ENCODE measurements at regions of chr5 and their contacts with region 1.

Region 1: GRCh38 chr5:132238169-132238744 is 10.6 kb upstream of the P4HA2 start:
- DNase-seq: peak; percentile 89
- ATAC-seq: peak; percentile 95
- H3K4me3 Mint-ChIP-seq: no peak overlapping the region
- H3K27ac Mint-ChIP-seq: no peak overlapping the region
- H3K4me1 Mint-ChIP-seq: no peaks in the 10 kb centered on the region
- H3K27me3 Mint-ChIP-seq: no peaks in the 10 kb centered on the region; the same call in 1 of the 2 replicates
- CTCF ChIP-seq: peak; percentile 78

Region 2: DNA sequence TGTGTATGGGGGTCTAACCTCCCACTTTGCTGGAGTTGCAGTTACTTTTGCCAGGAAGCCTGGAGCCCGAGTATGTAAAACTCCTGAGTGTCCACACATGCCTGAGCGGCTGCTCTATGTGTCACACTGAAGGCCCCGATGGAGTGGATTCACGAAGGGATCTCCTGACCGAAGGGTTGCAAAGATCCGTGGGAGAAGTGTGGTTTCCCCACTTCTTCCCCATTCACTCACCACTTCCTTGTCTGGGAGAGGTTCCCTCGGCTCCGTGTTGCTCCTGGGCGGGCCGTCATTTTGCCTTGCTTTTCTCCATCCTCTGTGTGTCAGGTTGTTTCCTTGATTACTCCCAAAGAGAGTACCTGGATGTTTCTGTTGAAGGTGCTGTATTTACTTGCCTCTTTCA is 194.1 kb before region 1 on chr5:
- CTCF ChIA-PET with region 1: no interaction called
- POLR2A ChIA-PET with region 1: no interaction called
- DNase-seq: no peak
- ATAC-seq: no peak
- H3K4me3 Mint-ChIP-seq: no peak overlapping the region
- H3K27ac Mint-ChIP-seq: no peak overlapping the region
- H3K4me1 Mint-ChIP-seq: peaks cover 14% of the 10 kb centered on the region
- H3K27me3 Mint-ChIP-seq: no peaks in the 10 kb centered on the region
- CTCF ChIP-seq: no peak

Region 3: GRCh38 chr5:132180134-132180745 is 58.0 kb before region 1 on chr5:
- CTCF ChIA-PET with region 1: interaction called, 18 read pairs
- POLR2A ChIA-PET with region 1: no interaction called
- DNase-seq: no peak
- ATAC-seq: peak; percentile 35
- H3K4me3 Mint-ChIP-seq: peak overlapping the region; percentile 53
- H3K27ac Mint-ChIP-seq: no peak overlapping the region
- H3K4me1 Mint-ChIP-seq: peaks cover 23% of the 10 kb centered on the region
- H3K27me3 Mint-ChIP-seq: no peaks in the 10 kb centered on the region
- CTCF ChIP-seq: peak; percentile 54; the same call in 1 of the 2 replicates

Region 4: DNA sequence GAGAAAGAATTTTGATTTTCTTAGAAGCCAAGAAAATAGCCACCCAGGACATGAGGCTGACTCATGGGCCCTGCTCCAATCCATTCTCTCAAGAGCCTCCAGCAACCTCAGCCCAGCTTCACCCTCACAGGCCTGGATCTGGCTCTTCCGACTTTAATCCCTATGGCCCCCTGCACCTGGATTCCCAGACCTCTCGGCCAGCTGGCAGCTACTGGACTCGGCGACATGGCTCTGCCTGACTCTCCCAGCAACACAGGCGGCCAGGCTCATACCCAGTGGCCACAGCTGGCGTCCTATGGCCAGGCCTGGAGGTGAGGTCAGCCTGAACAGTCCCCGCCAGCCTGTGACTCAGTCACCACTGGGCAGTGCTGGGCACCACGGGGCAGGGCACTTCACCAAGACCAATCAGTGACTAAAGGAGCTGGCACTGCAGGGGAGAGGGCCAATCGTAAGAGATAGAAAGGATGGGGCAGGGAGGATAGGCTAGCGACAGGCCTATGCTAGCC is 13.0 kb after region 1 on chr5:
- CTCF ChIA-PET with region 1: interaction called, 47 read pairs
- POLR2A ChIA-PET with region 1: no interaction called
- DNase-seq: no peak
- ATAC-seq: no peak
- H3K4me3 Mint-ChIP-seq: no peak overlapping the region
- H3K27ac Mint-ChIP-seq: no peak overlapping the region
- H3K4me1 Mint-ChIP-seq: peaks cover 6% of the 10 kb centered on the region; the same call in 1 of the 2 replicates
- H3K27me3 Mint-ChIP-seq: peaks cover 8% of the 10 kb centered on the region
- CTCF ChIP-seq: no peak

Region 5: DNA sequence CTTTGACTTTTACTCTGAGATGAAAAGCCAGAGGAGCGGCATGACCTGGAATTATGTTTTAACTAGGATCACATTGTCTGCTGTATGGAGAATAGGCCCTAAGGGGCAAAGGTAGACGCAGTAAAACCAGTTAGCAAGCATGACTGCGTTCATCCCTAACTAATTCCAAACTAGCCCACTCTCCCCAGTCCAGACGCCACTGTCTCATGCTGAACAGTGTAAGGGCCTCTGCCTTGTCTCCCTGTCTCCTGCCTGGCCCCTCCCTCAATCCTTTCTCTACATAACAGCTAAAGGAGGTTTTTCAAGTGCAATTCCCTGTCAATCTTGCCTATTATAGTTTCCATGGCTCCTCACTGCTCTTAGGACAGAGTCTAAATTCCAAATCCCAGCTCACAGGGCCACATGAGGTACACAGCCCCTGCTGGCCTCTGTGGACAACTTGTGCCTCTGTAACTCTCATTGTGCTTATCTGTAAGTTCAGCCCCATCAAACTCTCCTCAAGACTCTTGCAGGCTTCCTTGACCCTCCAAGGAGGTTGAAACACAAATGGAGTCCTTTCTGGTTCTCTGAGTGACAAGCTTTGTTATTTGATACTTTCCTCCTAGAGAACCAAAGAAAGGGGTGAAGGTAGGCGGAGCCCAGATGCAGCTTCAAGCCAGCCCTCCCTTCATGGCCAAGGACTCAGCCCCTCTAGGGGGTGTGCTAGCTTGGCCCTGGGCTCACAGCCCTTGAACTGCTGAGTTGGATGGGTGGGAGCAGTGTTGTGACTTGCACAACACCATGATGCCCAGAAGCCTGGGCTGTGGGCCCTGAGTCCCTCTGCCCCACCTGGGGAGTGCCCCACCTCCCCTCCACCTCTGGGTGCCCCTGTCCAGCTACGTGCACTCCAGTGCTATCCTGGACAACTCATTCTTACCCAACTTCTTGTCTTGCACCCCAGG is 40.0 kb after region 1 on chr5:
- CTCF ChIA-PET with region 1: interaction called, 37 read pairs
- POLR2A ChIA-PET with region 1: no interaction called
- DNase-seq: peak; percentile 42
- ATAC-seq: peak; percentile 95
- H3K4me3 Mint-ChIP-seq: no peak overlapping the region
- H3K27ac Mint-ChIP-seq: peak overlapping the region; percentile 85
- H3K4me1 Mint-ChIP-seq: peaks cover 19% of the 10 kb centered on the region
- H3K27me3 Mint-ChIP-seq: peaks cover 13% of the 10 kb centered on the region
- CTCF ChIP-seq: no peak

Region 6: DNA sequence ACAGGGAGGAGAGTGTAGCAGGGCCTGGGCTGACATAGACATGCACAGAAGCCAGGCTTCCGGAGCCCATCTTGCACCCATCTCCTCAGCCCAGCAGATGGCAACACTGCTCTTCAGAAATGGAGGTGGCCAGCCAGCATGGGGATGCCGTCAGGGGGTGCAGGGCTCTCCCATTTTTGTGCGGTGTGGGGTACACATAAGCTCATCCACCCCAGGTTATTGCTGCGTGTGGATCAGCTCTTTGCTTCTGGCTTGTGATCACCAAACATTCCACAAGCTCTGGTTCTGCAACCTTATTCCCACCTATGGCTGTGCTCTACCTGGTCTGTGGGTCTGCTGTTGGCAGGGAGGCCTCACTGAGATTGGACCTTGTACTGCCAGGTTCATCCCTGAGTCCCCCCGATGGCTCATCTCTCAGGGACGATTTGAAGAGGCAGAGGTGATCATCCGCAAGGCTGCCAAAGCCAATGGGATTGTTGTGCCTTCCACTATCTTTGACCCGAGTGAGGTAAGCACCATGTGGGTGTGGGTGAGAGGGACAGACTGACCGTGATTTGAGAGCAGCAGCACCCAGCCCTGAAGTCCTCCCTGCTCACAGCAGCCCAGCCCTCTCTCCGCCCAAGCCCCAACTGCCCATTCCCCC is 148.5 kb after region 1 on chr5:
- CTCF ChIA-PET with region 1: interaction called, 15 read pairs
- POLR2A ChIA-PET with region 1: no interaction called
- DNase-seq: peak; percentile 74
- ATAC-seq: peak; percentile 95
- H3K4me3 Mint-ChIP-seq: no peak overlapping the region
- H3K27ac Mint-ChIP-seq: no peak overlapping the region
- H3K4me1 Mint-ChIP-seq: peaks cover 8% of the 10 kb centered on the region
- H3K27me3 Mint-ChIP-seq: no peaks in the 10 kb centered on the region
- CTCF ChIP-seq: peak; percentile 46; the same call in 1 of the 2 replicates